Posterior vena cava (tissue), 2 donors: ENCODE measurements at regions of chr4 and their contacts with region 1.

Region 1: GRCh38 chr4:57426779-57427395 is 316.7 kb upstream of the IGFBP7 start:
- DNase-seq: peak; percentile 90

Region 2: GRCh38 chr4:57163530-57164459 is 263.1 kb before region 1 on chr4:
- intact Hi-C with region 1: loop called in 1 of 2 experiments (anchors 10 kb)
- DNase-seq: peak; percentile 93

Region 3: DNA sequence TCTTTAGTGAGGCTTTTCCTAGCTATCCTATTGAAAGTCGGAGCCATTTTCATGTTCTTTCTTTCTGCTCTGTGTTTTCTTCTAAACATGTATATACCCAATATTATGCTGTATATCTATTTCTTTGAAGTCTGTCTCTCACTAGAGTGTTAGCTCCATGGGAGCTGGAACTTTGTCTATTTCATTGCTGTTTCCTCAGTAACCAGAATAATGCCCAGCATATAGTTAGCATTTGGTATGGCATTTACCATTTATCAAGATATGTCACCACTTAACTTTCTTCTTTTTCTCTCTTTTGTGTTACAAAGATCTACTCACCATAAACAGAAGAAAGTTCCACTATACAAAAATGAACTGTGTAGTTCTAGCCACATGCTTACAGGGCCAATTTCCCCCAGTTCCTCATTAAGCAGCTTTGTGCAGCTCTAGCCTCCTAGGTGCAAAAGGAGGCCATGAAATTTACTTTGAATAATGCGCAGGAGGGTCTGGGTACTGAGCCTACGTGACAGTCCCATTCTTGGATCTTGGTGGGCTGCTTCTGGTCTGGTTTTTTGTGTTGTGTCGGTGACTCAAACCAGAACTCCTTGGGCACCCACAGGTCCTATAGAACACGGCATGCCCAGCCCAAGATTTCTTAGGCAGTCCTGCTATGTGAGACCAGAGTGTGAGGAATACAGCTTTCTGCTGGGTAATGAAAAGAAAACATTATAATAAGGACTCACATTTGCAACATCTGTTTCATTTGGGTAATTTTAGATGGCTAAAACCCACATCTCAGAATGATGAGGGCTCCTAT is 14.4 kb before region 1 on chr4:
- intact Hi-C with region 1: loop called in 1 of 2 experiments (anchors 1 kb)
- DNase-seq: no peak

Region 4: GRCh38 chr4:58477950-58478349 is 1051.1 kb after region 1 on chr4:
- intact Hi-C with region 1: loop called in 1 of 2 experiments (anchors 10 kb)
- DNase-seq: no peak